ENCODE measurements at regions of chr2 and their contacts with region 1.

Region 1: GRCh38 chr2:75466708-75467311 is 93.9 kb downstream of the EVA1A start:
- DNase-seq: no peak
- ATAC-seq: peak; percentile 69
- H3K4me3 ChIP-seq: no peak overlapping the region
- H3K27ac ChIP-seq: no peak overlapping the region
- H3K4me1 ChIP-seq: no peaks in the 10 kb centered on the region
- H3K27me3 ChIP-seq: no peaks in the 10 kb centered on the region
- CTCF ChIP-seq: peak; percentile 64 to 68 (median 66)
- EP300 ChIP-seq: no peak
- POLR2A ChIP-seq: no peak
- RAD21 ChIP-seq: peak; percentile 81

Region 2: GRCh38 chr2:74919827-74920226 is 547.0 kb before region 1 on chr2:
- CTCF ChIA-PET with region 1: interaction called, 24 read pairs
- POLR2A ChIA-PET with region 1: no interaction called
- RAD21 ChIA-PET with region 1: interaction called, 3 read pairs
- SMC1A ChIA-PET with region 1: interaction called, 3 read pairs
- in situ Hi-C with region 1: no loop called
- intact Hi-C with region 1: loop called (anchors 2 kb)
- DNase-seq: no peak
- ATAC-seq: peak; percentile 77
- H3K4me3 ChIP-seq: no peak overlapping the region
- H3K27ac ChIP-seq: no peak overlapping the region
- H3K4me1 ChIP-seq: peaks cover 6% of the 10 kb centered on the region; the same call in 1 of the 2 replicates
- H3K27me3 ChIP-seq: no peaks in the 10 kb centered on the region
- CTCF ChIP-seq: peak; percentile 69 to 85 (median 84)
- EP300 ChIP-seq: no peak
- POLR2A ChIP-seq: no peak
- RAD21 ChIP-seq: peak; percentile 95

Region 3: GRCh38 chr2:75076088-75076487 is 390.7 kb before region 1 on chr2:
- CTCF ChIA-PET with region 1: interaction called, 11 read pairs
- POLR2A ChIA-PET with region 1: no interaction called
- RAD21 ChIA-PET with region 1: interaction called, 11 read pairs
- SMC1A ChIA-PET with region 1: interaction called, 3 read pairs
- in situ Hi-C with region 1: no loop called
- intact Hi-C with region 1: no loop called
- DNase-seq: no peak
- ATAC-seq: no peak
- H3K4me3 ChIP-seq: no peak overlapping the region
- H3K27ac ChIP-seq: no peak overlapping the region
- H3K4me1 ChIP-seq: peaks cover 8% of the 10 kb centered on the region
- H3K27me3 ChIP-seq: no peaks in the 10 kb centered on the region
- CTCF ChIP-seq: no peak
- EP300 ChIP-seq: no peak
- POLR2A ChIP-seq: no peak
- RAD21 ChIP-seq: no peak

Region 4: GRCh38 chr2:75157430-75157829 is 309.4 kb before region 1 on chr2:
- CTCF ChIA-PET with region 1: interaction called, 26 read pairs
- POLR2A ChIA-PET with region 1: no interaction called
- RAD21 ChIA-PET with region 1: interaction called, 3 read pairs
- SMC1A ChIA-PET with region 1: interaction called, 5 read pairs
- in situ Hi-C with region 1: no loop called
- intact Hi-C with region 1: no loop called
- DNase-seq: no peak
- ATAC-seq: peak; percentile 45; the same call in 2 of the 3 replicates
- H3K4me3 ChIP-seq: no peak overlapping the region
- H3K27ac ChIP-seq: no peak overlapping the region
- H3K4me1 ChIP-seq: no peaks in the 10 kb centered on the region
- H3K27me3 ChIP-seq: no peaks in the 10 kb centered on the region
- CTCF ChIP-seq: peak in 2 of 3 experiments; percentile 15 to 25; a peak in 2 of 6 replicates
- EP300 ChIP-seq: no peak
- POLR2A ChIP-seq: no peak
- RAD21 ChIP-seq: peak; percentile 43; the same call in 1 of the 2 replicates

Region 5: DNA sequence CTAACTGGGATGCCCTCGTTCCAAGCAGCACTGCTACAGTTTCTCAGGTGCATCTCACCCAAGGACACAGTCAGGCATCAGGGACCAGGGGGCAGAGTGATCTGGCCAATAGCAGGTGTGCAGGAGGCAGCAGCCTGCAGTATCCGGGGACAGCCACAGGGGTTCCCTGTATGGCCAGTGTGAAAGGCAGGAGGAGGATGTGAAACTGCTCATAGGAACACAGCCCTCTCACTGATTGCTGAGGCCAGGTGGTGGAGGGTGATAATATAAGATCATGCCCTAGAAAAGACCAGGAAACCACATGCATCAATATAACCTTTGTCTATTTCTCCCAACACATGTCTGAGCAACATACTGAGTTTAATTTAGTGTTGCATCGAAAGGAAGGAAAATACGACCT is 154.8 kb before region 1 on chr2:
- CTCF ChIA-PET with region 1: interaction called, 45 read pairs
- POLR2A ChIA-PET with region 1: no interaction called
- RAD21 ChIA-PET with region 1: interaction called, 4 read pairs
- SMC1A ChIA-PET with region 1: interaction called, 6 read pairs
- in situ Hi-C with region 1: no loop called
- intact Hi-C with region 1: loop called (anchors 2 kb)
- DNase-seq: peak; percentile 89
- ATAC-seq: peak; percentile 100
- H3K4me3 ChIP-seq: no peak overlapping the region
- H3K27ac ChIP-seq: no peak overlapping the region
- H3K4me1 ChIP-seq: peaks cover 9% of the 10 kb centered on the region
- H3K27me3 ChIP-seq: no peaks in the 10 kb centered on the region
- CTCF ChIP-seq: peak; percentile 84 to 89 (median 85)
- EP300 ChIP-seq: peak; percentile 28 to 76; a peak in 3 of 4 replicates
- POLR2A ChIP-seq: no peak
- RAD21 ChIP-seq: peak; percentile 79

Region 6: GRCh38 chr2:75432761-75433361 is 33.9 kb before region 1 on chr2:
- CTCF ChIA-PET with region 1: interaction called, 107 read pairs
- POLR2A ChIA-PET with region 1: interaction called, 10 read pairs
- RAD21 ChIA-PET with region 1: interaction called, 64 read pairs
- SMC1A ChIA-PET with region 1: interaction called, 183 read pairs
- in situ Hi-C with region 1: no loop called
- intact Hi-C with region 1: loop called (anchors 1 kb)
- DNase-seq: peak; percentile 96
- ATAC-seq: peak; percentile 86
- H3K4me3 ChIP-seq: peak overlapping the region; percentile 31
- H3K27ac ChIP-seq: peak overlapping the region; percentile 95
- H3K4me1 ChIP-seq: peaks cover 45% of the 10 kb centered on the region
- H3K27me3 ChIP-seq: no peaks in the 10 kb centered on the region
- CTCF ChIP-seq: no peak
- EP300 ChIP-seq: peak; percentile 50 to 69; a peak in 2 of 4 replicates
- POLR2A ChIP-seq: peak; percentile 66
- RAD21 ChIP-seq: peak; percentile 40

Region 7: DNA sequence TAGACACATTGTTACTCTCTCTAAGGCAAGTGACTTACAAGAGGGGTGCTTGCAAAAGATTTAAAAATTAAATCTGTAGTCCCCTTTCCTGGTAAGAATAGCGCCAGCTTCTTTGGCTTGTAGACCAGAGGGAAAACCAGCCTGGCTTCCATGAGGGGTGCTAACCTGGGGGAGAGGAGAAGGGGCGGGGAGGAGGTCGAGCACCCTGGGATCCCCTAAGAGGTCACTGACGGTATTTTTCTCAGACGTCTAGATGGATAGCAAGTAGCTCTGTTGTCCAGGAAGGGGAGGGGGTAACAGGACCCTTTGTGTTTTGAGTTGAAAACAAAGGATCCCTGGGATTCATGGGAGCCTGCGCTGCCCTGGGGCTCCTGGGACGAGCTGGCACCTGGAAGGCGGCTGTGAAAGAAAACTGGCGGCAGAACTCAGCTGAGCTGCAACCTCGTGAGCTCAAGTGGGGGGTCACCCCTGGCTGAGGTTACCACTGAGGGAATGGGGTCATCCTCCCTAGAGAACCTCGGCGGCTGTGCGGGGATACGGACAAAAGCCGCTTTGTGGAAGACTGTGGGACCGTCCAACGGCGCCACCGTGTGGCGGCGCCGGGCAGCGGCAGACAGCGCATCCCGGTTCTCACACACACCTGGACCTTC is 142.0 kb after region 1 on chr2:
- CTCF ChIA-PET with region 1: interaction called, 76 read pairs
- POLR2A ChIA-PET with region 1: no interaction called
- RAD21 ChIA-PET with region 1: interaction called, 25 read pairs
- SMC1A ChIA-PET with region 1: interaction called, 18 read pairs
- in situ Hi-C with region 1: loop called (anchors 5 kb)
- intact Hi-C with region 1: loop called (anchors 1 kb)
- DNase-seq: no peak
- ATAC-seq: peak; percentile 97
- H3K4me3 ChIP-seq: peak overlapping the region; percentile 49; the same call in 1 of the 2 replicates
- H3K27ac ChIP-seq: no peak overlapping the region
- H3K4me1 ChIP-seq: 0 out of 2 replicates have a peak, but pooled peaks cover 2% of the 10 kb centered on the region
- H3K27me3 ChIP-seq: no peaks in the 10 kb centered on the region
- CTCF ChIP-seq: peak; percentile 96 to 98 (median 98)
- EP300 ChIP-seq: no peak
- POLR2A ChIP-seq: no peak
- RAD21 ChIP-seq: peak; percentile 88